Activated CD8-positive, alpha-beta T cell treated with anti-CD3 and anti-CD28 coated beads for 36 hours (primary cell): ENCODE measurements at regions of chr11 and their contacts with region 1.

Region 1: GRCh38 chr11:74388678-74389327 is 9.4 kb downstream of the PGM2L1 start:
- DNase-seq: peak; percentile 87
- ATAC-seq: peak; percentile 78
- H3K4me3 Mint-ChIP-seq: no peak overlapping the region
- H3K27ac Mint-ChIP-seq: peak overlapping the region; percentile 55
- H3K4me1 Mint-ChIP-seq: peaks cover 31% of the 10 kb centered on the region
- H3K27me3 Mint-ChIP-seq: no peaks in the 10 kb centered on the region
- CTCF ChIP-seq: peak; percentile 86

Region 2: DNA sequence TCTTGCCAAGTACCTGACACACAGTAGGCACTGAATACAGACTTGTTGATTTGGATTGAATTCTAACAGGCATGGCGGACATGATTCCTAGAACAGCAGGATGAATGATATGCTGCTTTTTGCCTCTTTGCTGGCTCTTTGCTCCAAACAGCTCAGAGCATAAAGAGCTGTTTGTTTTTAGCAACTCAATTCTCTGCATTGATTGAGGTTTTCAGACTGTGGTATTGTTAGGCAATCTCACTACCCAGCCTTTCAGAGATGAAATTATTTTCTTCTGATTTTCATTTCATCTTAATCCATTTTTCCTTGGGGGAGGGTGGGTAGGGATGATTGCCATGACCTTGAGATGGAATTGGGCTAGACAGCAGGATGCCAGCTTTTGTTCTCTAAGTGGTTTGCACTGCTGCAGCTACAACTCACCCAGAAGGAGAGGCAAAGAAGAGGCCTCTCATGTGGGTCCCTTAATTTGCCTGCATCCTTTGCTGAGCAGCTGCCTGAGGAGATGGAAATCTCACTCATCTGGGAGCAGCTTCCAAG is 532.7 kb before region 1 on chr11:
- CTCF ChIA-PET with region 1: no interaction called
- POLR2A ChIA-PET with region 1: no interaction called
- intact Hi-C with region 1: no loop called
- DNase-seq: no peak
- ATAC-seq: no peak
- H3K4me3 Mint-ChIP-seq: no peak overlapping the region
- H3K27ac Mint-ChIP-seq: no peak overlapping the region
- H3K4me1 Mint-ChIP-seq: no peaks in the 10 kb centered on the region
- H3K27me3 Mint-ChIP-seq: no peaks in the 10 kb centered on the region
- CTCF ChIP-seq: no peak

Region 3: GRCh38 chr11:74409633-74410032 is 20.8 kb after region 1 on chr11:
- CTCF ChIA-PET with region 1: interaction called, 20 read pairs
- POLR2A ChIA-PET with region 1: interaction called, 3 read pairs
- intact Hi-C with region 1: no loop called
- DNase-seq: no peak
- ATAC-seq: no peak
- H3K4me3 Mint-ChIP-seq: no peak overlapping the region
- H3K27ac Mint-ChIP-seq: no peak overlapping the region
- H3K4me1 Mint-ChIP-seq: no peaks in the 10 kb centered on the region
- H3K27me3 Mint-ChIP-seq: peaks cover 10% of the 10 kb centered on the region
- CTCF ChIP-seq: no peak

Region 4: DNA sequence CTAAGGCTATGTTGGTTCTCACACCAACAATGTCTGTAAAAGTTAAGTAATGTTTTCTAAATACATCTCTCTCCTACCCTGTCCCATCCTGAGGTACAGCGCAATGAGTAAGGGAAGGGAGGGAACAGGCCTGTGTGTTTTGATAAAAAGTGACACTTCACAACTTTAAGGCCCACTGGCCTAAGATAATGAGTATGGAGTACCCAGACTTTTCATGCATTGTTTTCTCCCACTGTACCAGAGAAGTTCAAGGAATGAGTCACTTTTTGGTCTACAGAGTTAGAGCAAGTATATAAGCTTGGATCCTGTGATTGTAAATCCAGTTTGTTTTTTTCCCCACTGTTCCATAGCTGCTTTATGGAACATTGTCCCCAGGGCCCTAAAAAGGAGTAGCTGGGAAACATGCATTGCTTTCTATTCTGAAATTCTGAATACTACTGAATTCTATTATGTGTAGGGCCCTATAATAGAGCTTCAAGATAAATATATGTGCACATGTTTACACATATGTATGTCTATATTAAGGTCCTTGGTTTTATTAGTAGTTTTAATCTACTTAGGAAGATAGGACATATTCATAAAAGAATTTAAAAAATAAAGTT is 48.7 kb after region 1 on chr11:
- CTCF ChIA-PET with region 1: interaction called, 12 read pairs
- POLR2A ChIA-PET with region 1: interaction called, 3 read pairs
- intact Hi-C with region 1: no loop called
- DNase-seq: no peak
- ATAC-seq: no peak
- H3K4me3 Mint-ChIP-seq: no peak overlapping the region
- H3K27ac Mint-ChIP-seq: no peak overlapping the region
- H3K4me1 Mint-ChIP-seq: no peaks in the 10 kb centered on the region
- H3K27me3 Mint-ChIP-seq: peaks cover 1% of the 10 kb centered on the region
- CTCF ChIP-seq: no peak

Region 5: GRCh38 chr11:74492974-74493790 is 104.4 kb after region 1 on chr11 and contains the start of gene LIPT2:
- CTCF ChIA-PET with region 1: interaction called, 17 read pairs
- POLR2A ChIA-PET with region 1: interaction called, 3 read pairs
- intact Hi-C with region 1: no loop called
- DNase-seq: peak; percentile 99
- ATAC-seq: peak; percentile 97
- H3K4me3 Mint-ChIP-seq: peak within 1 kb of the TSS; percentile 82
- H3K27ac Mint-ChIP-seq: peak within 1 kb of the TSS; percentile 89
- H3K4me1 Mint-ChIP-seq: peaks cover 16% of the 10 kb centered on the region
- H3K27me3 Mint-ChIP-seq: no peaks in the 10 kb centered on the region
- CTCF ChIP-seq: no peak
- total RNA-seq, gene LIPT2: 5.9 to 6.8 TPM